HEK293T (cell line): ENCODE measurements at regions of chr6 and their contacts with region 1.

Region 1: DNA sequence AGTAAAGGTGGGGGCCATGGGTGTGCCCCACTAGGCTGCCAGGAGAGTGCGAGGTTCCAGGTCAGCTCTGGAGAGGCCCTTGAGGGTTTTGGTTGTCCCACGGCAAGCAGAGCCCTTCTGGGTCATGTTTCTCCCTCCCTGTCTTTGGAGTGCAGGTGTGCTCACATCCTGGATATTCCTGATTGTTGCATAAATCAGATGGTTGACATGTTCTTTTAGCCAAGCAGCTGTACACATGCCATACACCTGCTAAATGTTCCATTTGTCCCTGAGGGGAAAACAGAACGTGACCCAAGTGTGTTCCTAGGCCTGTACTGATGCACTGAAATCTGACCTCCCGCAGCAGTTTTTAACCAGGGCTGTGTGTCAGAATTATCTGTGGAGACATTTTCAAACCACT is 77.5 kb upstream of the BEND3 start:
- DNase-seq: no peak

Region 2: DNA sequence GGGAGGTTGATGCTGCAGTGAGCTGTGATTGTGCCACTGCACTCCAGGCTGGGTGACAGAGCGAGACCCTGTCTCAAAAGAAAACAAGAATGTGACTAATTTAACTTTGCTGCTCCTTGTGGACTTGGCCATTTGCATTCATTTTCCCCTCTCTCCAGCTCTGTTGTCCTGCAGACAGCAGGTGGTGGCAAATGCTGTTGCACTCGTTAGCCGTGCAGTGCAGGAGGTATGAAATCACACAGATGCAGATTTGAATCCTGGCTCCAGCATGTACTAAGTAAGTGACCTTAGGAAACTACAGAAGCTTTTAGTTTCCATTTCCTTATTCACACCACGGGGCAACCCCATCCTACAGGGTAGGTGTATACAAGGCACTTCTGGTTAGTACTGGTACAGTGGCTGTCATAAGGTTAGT is 67.9 kb before region 1 on chr6:
- CTCF ChIA-PET with region 1: interaction called, 10 read pairs
- POLR2A ChIA-PET with region 1: no interaction called
- DNase-seq: no peak

Region 3: GRCh38 chr6:107218142-107218541 is 25.3 kb after region 1 on chr6:
- CTCF ChIA-PET with region 1: no interaction called
- POLR2A ChIA-PET with region 1: no interaction called
- DNase-seq: no peak

Region 4: DNA sequence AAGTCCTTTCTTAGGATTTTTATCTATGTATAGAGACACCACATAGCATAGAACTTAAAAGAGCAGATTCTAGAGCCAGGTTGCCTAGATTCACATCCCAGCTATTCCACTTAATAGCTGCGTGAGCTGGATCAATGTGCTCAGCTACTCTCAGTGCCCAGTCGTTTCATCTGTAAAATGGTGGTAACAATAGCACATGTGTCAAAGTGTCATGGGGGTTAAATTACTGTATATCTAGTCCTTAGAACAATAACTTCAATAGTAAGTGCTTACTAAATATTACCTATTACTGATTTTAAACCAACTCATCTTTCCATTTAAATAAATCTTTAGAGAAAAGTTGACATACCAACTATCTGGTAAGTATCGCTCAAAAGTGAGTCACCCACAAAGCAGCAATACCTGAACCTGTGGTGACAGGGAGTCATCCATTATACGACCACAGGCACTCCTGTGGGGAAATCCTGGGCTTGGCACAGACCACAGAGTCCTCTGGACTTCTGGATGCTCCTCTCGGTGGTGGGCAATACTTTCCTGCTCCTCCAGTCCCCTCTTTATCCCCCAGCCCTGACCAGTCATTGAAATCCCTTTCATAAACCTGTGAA is 111.7 kb after region 1 on chr6:
- CTCF ChIA-PET with region 1: no interaction called
- POLR2A ChIA-PET with region 1: no interaction called
- DNase-seq: no peak